Heart right ventricle (tissue), 16 donors: ENCODE measurements at regions of chr2 and their contacts with region 1.

Region 1: DNA sequence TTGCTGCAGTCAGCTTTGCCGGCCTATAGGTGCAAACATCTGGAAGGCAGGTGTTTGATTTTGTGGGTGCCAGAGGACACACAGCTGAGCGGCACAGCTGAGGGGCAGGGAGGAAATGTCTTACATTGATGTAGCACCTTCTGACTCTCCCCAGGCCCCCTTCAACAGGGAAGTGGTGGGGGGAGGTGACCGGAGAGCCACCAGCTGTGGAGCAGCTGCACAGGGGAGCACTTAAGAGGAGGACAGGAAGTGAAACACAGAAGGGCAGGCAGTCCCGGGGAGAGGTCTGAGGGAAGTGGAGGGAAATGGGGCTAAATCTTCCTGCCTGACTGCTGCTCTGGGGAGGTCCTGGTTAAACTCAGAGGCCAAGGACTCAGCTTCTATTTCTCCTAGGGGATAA is 409.1 kb downstream of the TNS1 start:
- DNase-seq: no peak
- ATAC-seq: peak in 1 of 8 donors; percentile 11
- H3K4me3 ChIP-seq: no peak overlapping the region
- H3K27ac ChIP-seq: no peak overlapping the region
- H3K4me1 ChIP-seq: peaks cover 0 to 8% (median 0%) of the 10 kb centered on the region in 9 donors
- H3K27me3 ChIP-seq: no peaks in the 10 kb centered on the region
- CTCF ChIP-seq: no peak

Region 2: DNA sequence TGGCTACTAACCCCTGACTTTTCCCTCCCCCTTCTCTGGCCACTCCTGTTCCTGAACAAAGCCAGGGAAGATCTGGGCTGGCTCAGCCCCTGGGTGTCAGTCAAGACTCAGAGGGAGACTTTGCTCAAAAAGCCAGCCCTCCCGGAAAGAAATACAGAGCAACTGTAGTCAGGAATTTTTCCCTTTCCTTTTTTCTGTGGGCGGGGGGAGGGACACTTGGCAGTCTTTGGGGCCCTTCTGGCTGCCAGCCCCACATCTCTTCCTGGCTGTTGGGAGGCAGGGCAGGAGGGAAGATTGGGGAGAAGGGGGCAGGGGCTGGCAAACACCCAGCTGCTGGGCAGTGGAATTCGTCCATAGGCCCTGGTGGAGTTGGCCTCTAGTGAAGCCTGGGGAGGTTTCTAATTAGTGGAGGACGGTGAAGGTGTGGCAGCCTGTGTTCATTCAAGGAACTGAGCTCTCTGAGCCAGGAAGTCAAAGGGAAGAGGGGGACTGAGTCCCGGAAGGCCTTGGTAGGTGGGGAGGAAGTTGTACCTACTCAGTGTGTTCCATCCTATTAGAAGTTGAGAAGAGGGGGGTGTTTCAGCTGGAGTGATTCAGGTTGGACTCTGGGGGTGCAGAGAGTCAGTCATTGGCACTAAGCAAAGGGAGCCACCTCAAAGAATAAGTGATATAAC is 949.6 kb before region 1 on chr2:
- intact Hi-C with region 1: no loop called
- DNase-seq: no peak
- ATAC-seq: peak in 7 of 8 donors; percentile 33 to 72 (median 46)
- H3K4me3 ChIP-seq: no peak overlapping the region
- H3K27ac ChIP-seq: peak overlapping the region in 9 of 10 donors; percentile 34 to 80 (median 63)
- H3K4me1 ChIP-seq: peaks cover 8 to 39% (median 24%) of the 10 kb centered on the region in 9 donors
- H3K27me3 ChIP-seq: no peaks in the 10 kb centered on the region
- CTCF ChIP-seq: no peak

Region 3: DNA sequence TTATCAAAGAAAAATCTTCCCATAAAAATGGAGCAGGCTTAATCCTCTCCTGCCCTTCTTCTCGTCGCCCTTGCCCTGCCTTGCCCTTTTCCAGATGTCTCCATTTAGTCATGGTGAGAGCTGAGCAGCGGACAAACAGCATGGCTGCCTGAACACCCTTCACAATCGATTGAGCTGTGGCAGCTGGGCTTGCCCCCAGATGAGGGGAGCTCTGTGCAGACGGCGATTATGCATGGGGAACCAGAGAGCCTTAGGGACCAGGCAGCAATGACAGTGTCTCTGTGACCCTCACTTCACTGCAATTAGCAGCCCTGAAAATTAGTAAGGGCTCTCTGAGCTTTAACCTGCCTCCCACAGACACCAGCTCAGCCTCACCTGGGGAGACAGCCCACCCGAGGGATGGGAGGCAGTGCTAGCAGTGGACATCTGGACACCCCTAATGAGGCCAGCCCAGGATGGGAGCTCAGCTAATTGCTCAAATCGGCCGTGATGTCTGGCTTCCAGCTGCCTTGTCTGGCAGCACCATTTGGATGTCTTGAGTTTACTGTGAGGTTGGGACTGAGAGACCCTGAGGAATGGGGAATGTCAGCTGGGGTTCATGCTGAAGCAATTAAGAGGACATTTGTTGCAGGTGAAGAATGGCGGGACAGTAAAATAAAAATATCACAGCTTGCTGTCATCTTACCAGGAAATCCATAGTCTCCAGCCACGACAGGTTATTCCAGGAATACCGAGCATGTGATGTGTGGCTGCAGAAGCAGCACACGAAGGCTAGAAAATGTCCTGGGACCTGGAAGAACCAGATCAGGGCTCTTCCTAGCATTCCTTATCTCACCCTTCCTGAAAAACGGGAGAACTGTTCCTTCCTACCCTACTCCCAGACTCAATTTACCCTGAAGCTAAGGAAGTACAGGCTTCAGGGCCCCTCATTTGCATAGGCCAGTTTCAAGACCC is 43.5 kb after region 1 on chr2:
- intact Hi-C with region 1: loop called in 1 of 10 experiments (anchors 5 kb)
- DNase-seq: no peak
- ATAC-seq: peak in 5 of 8 donors; percentile 25 to 56 (median 29)
- H3K4me3 ChIP-seq: no peak overlapping the region
- H3K27ac ChIP-seq: peak overlapping the region in 1 of 10 donors; percentile 27
- H3K4me1 ChIP-seq: peaks cover 0 to 37% (median 17%) of the 10 kb centered on the region in 9 donors
- H3K27me3 ChIP-seq: no peaks in the 10 kb centered on the region
- CTCF ChIP-seq: no peak